SK-N-SH (cell line): ENCODE measurements at regions of chr18 and their contacts with region 1.

Region 1: DNA sequence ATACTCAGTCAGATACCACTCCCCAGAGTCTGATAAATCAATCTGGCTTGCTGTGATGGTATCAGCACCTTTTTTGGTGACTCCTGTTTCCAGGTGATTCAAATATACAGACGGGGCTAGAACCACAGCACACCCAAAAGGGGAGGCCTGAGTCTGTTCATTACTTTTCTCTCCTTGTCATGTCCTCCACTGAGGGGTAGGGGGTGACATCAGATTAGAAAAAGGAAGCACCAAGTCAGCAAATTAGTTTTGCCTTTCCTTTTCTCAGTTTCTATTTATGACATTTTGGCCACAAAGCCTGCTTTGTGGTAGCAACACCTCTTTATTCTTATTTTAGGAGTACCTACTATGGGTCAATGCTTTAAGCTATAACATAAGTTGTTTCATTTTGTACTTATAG is 127.4 kb downstream of the CCDC102B start:
- DNase-seq: no peak
- H3K4me3 ChIP-seq: no peak overlapping the region
- H3K27ac ChIP-seq: no peak overlapping the region
- H3K4me1 ChIP-seq: no peaks in the 10 kb centered on the region
- H3K27me3 ChIP-seq: no peaks in the 10 kb centered on the region
- CTCF ChIP-seq: peak; percentile 53
- EP300 ChIP-seq: no peak
- RAD21 ChIP-seq: peak; percentile 70

Region 2: DNA sequence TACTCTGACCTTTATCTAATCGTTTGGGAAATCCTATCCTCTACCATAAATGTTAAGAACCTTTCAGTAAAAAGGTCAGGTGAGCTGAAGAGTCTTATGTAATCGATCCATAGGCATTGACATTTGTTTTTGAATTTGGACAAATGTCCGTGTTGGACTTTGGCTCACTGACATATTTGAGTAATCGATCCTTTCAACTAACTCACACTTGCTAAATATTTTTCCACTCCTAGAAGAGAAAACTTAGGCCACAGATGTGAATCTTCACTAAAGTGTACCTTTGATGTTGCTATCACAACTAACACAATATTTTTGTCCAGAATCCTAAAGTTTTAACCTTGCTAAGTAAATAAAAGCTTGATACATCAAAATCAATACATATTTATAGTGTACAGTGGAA is 37.9 kb before region 1 on chr18:
- CTCF ChIA-PET with region 1: no interaction called
- POLR2A ChIA-PET with region 1: no interaction called
- DNase-seq: no peak
- H3K4me3 ChIP-seq: no peak overlapping the region
- H3K27ac ChIP-seq: no peak overlapping the region
- H3K4me1 ChIP-seq: no peaks in the 10 kb centered on the region
- H3K27me3 ChIP-seq: no peaks in the 10 kb centered on the region
- CTCF ChIP-seq: no peak
- EP300 ChIP-seq: no peak
- RAD21 ChIP-seq: no peak

Region 3: DNA sequence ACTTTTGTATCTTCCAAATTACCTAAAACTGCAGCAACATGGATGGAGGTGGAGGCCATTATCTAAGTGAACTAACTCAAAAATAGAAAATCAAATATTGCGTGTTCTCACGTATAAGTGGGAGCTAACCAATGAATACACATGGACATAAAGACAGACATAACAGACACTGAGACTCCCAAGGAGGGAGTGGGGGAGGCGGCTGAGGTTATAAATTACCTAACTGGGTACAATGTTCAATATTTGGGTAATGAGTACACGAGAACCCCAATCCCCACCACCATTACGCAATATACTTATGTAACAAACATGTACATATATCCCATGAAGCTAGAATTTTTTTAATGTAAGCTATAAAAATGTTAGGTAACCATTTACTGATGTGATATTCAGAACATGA is 1160.4 kb after region 1 on chr18:
- CTCF ChIA-PET with region 1: interaction called, 12 read pairs
- POLR2A ChIA-PET with region 1: no interaction called
- DNase-seq: no peak
- H3K4me3 ChIP-seq: no peak overlapping the region
- H3K27ac ChIP-seq: no peak overlapping the region
- H3K4me1 ChIP-seq: no peaks in the 10 kb centered on the region; a peak in 1 of 4 replicates
- H3K27me3 ChIP-seq: no peaks in the 10 kb centered on the region
- CTCF ChIP-seq: no peak
- EP300 ChIP-seq: no peak
- RAD21 ChIP-seq: no peak